ENCODE measurements at regions of chr2 and their contacts with region 1.

Region 1: GRCh38 chr2:231514103-231514950 is 15.9 kb downstream of the NMUR1 start:
- DNase-seq: peak; percentile 97 to 99 (median 98)
- ATAC-seq: peak; percentile 99
- H3K4me3 ChIP-seq: peak overlapping the region; percentile 58
- H3K27ac ChIP-seq: peak overlapping the region; percentile 93
- H3K4me1 ChIP-seq: peaks cover 9 to 13% of the 10 kb centered on the region in 2 experiments; a peak in 4 of 5 replicates
- H3K27me3 ChIP-seq: no peaks in the 10 kb centered on the region; a peak in 1 of 5 replicates
- CTCF ChIP-seq: no peak
- EP300 ChIP-seq: no peak
- POLR2A ChIP-seq: peak; percentile 90
- RAD21 ChIP-seq: no peak

Region 2: GRCh38 chr2:231068525-231069222 is 445.7 kb before region 1 on chr2:
- CTCF ChIA-PET with region 1: no interaction called
- POLR2A ChIA-PET with region 1: no interaction called
- in situ Hi-C with region 1: no loop called
- intact Hi-C with region 1: loop called (anchors 5 kb)
- DNase-seq: peak in 3 of 4 experiments; percentile 10 to 17 (median 16)
- ATAC-seq: 0 out of 3 replicates have a peak, but pooled peaks have one; percentile 22
- H3K4me3 ChIP-seq: no peak overlapping the region
- H3K27ac ChIP-seq: no peak overlapping the region
- H3K4me1 ChIP-seq: peaks cover 0 to 5% of the 10 kb centered on the region in 2 experiments; a peak in 1 of 5 replicates
- H3K27me3 ChIP-seq: no peaks in the 10 kb centered on the region
- CTCF ChIP-seq: no peak
- EP300 ChIP-seq: peak; percentile 23; the same call in 1 of the 2 replicates
- POLR2A ChIP-seq: no peak
- RAD21 ChIP-seq: no peak

Region 3: DNA sequence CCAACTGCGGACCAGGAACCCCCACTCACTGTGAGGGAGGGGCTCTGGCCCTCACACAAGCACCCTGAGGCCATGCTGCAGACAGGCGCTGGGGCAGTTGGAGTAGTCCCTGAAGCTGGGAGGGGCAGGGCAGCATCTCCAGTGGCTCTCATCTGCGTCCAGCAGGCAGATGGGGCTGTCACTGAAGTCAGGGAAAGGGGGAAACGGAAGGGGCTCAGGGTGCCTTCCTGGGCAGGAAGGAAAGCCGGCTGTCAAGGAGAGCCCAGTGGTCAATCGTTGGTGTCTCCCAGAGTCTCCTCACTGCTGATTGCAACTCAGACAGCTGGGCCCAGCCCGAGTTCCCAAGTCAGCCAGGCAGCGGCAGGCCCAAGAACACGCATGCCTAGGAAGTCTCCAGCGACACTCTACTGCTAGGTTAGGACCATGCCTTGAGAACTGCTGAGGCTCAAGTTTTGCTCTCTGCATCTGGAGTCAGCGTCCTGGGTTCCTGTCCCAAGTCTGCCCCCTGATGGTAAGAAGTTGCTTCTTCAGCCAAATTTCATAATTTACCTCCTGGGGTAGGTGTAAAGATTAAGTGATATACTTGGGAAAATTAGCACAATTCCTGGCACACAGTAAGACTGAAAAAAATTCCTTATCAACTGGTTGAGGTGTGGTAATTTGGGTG is 43.4 kb after region 1 on chr2:
- CTCF ChIA-PET with region 1: interaction called, 3 read pairs
- POLR2A ChIA-PET with region 1: no interaction called
- in situ Hi-C with region 1: loop called (anchors 5 kb)
- intact Hi-C with region 1: loop called (anchors 1 kb)
- DNase-seq: peak; percentile 61 to 73 (median 63)
- ATAC-seq: peak; percentile 94
- H3K4me3 ChIP-seq: no peak overlapping the region
- H3K27ac ChIP-seq: no peak overlapping the region
- H3K4me1 ChIP-seq: peaks cover 0 to 9% of the 10 kb centered on the region in 2 experiments; a peak in 1 of 5 replicates
- H3K27me3 ChIP-seq: no peaks in the 10 kb centered on the region; a peak in 1 of 5 replicates
- CTCF ChIP-seq: peak; percentile 75 to 88 (median 78)
- EP300 ChIP-seq: no peak
- POLR2A ChIP-seq: no peak
- RAD21 ChIP-seq: peak; percentile 81 to 86

Region 4: GRCh38 chr2:231604685-231605606 is 90.6 kb after region 1 on chr2:
- CTCF ChIA-PET with region 1: no interaction called
- POLR2A ChIA-PET with region 1: interaction called, 3 read pairs
- in situ Hi-C with region 1: no loop called
- intact Hi-C with region 1: loop called (anchors 5 kb)
- DNase-seq: peak; percentile 91 to 92 (median 92)
- ATAC-seq: peak; percentile 93
- H3K4me3 ChIP-seq: peak overlapping the region; percentile 30
- H3K27ac ChIP-seq: no peak overlapping the region
- H3K4me1 ChIP-seq: peaks cover 0 to 18% of the 10 kb centered on the region in 2 experiments; a peak in 3 of 5 replicates
- H3K27me3 ChIP-seq: no peaks in the 10 kb centered on the region
- CTCF ChIP-seq: no peak
- EP300 ChIP-seq: no peak
- POLR2A ChIP-seq: no peak
- RAD21 ChIP-seq: no peak

Region 5: DNA sequence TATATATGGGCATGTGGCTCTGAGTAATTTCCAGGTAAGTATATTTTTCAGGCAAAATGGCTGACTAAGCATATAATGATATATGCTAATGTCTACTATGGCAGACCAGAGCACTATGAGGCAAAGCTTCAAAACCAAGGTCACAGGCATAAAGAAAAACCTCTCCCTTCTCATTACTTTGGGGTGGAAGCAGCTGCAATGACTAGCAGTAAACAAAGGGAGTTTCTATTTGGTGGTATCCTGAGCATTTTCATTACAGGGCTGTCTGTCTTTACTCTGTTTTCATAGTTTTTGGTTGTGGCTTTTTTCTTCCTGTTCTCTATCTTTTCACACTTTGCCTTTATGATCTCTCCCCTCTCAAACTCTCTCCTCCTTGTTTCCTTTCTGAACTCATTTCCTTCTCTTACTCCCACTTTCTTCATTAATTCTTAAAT is 251.2 kb after region 1 on chr2:
- CTCF ChIA-PET with region 1: no interaction called
- POLR2A ChIA-PET with region 1: no interaction called
- in situ Hi-C with region 1: no loop called
- intact Hi-C with region 1: no loop called
- DNase-seq: no peak
- ATAC-seq: no peak
- H3K4me3 ChIP-seq: no peak overlapping the region
- H3K27ac ChIP-seq: no peak overlapping the region
- H3K4me1 ChIP-seq: no peaks in the 10 kb centered on the region
- H3K27me3 ChIP-seq: no peaks in the 10 kb centered on the region
- CTCF ChIP-seq: no peak
- EP300 ChIP-seq: no peak
- POLR2A ChIP-seq: no peak
- RAD21 ChIP-seq: no peak